ENCODE measurements at regions of chr16 and their contacts with region 1.

Region 1: DNA sequence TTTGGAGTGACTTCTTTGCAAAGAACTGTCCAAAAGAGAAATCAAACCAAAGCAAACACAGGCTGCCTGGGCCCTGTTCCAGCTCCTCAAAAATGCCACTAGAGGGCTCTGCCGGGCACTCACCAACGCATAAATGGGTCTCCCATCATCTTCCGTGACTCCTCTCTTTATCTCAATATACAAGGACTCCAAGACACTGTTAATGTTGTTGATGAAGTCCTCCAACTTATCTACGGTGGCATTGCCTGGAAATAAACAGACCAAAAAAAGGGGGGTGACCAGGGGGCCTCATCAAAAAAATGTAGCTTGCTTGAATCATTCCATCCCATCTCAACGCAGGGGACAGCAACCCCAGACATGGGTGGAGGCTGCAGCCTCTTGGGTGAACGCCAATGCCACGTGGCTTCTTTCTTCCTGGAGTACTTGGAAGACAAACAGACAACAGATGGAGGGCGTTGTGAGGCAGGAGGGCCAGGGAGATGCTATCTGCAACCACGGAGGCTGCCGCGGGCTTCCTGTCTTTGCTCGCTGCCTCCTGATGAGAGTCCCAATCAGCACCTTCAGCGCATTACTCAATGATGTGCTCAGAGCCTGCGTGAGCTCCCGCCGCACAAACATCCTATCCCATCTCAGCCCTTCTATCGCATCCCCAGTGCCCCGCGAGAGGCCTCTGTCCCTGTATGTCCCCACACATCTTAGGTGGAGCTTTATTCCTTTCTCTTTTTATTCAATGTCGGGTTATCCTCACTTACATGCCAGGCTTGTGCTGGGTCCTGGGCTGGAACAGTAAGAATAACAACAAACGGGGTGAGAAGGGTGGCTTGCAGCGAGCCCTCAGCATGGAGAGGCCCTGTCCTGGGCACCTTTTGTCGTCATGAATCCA is 32.0 kb downstream of the KDM8 start:
- DNase-seq: peak; percentile 92
- H3K4me3 ChIP-seq: no peak overlapping the region
- H3K27ac ChIP-seq: peak overlapping the region; percentile 77 to 90 (median 82)
- H3K4me1 ChIP-seq: peaks cover 32 to 90% (median 58%) of the 10 kb centered on the region in 4 donors
- H3K27me3 ChIP-seq: no peaks in the 10 kb centered on the region
- CTCF ChIP-seq: peak; percentile 79 to 86 (median 82)
- EP300 ChIP-seq: no peak
- POLR2A ChIP-seq: peak; percentile 41

Region 2: GRCh38 chr16:26524281-26524680 is 711.0 kb before region 1 on chr16:
- in situ Hi-C with region 1: no loop called
- intact Hi-C with region 1: no loop called
- DNase-seq: no peak
- H3K4me3 ChIP-seq: no peak overlapping the region
- H3K27ac ChIP-seq: no peak overlapping the region
- H3K4me1 ChIP-seq: no peaks in the 10 kb centered on the region
- H3K27me3 ChIP-seq: no peaks in the 10 kb centered on the region
- CTCF ChIP-seq: no peak
- EP300 ChIP-seq: no peak
- POLR2A ChIP-seq: no peak

Region 3: GRCh38 chr16:27326738-27327585 is 91.7 kb after region 1 on chr16:
- in situ Hi-C with region 1: loop called in 2 of 4 experiments (anchors 25 kb)
- intact Hi-C with region 1: no loop called
- DNase-seq: peak; percentile 77
- H3K4me3 ChIP-seq: no peak overlapping the region
- H3K27ac ChIP-seq: peak overlapping the region; percentile 93 to 99 (median 99)
- H3K4me1 ChIP-seq: peaks cover 57 to 96% (median 74%) of the 10 kb centered on the region in 4 donors
- H3K27me3 ChIP-seq: no peaks in the 10 kb centered on the region
- CTCF ChIP-seq: no peak
- EP300 ChIP-seq: peak; percentile 87
- POLR2A ChIP-seq: no peak

Region 4: GRCh38 chr16:27367461-27368357 is 132.4 kb after region 1 on chr16:
- in situ Hi-C with region 1: loop called in 1 of 4 experiments (anchors 10 kb)
- intact Hi-C with region 1: loop called (anchors 5 kb)
- DNase-seq: peak; percentile 88
- H3K4me3 ChIP-seq: peak overlapping the region in 1 of 4 donors; percentile 15
- H3K27ac ChIP-seq: peak overlapping the region; percentile 53 to 76 (median 61)
- H3K4me1 ChIP-seq: peaks cover 9 to 35% (median 27%) of the 10 kb centered on the region in 4 donors
- H3K27me3 ChIP-seq: no peaks in the 10 kb centered on the region
- CTCF ChIP-seq: peak; percentile 79 to 89 (median 82)
- EP300 ChIP-seq: no peak
- POLR2A ChIP-seq: no peak

Measured in transverse colon (tissue), 4 donors.